ENCODE measurements at regions of chr3 and their contacts with region 1.

Region 1: DNA sequence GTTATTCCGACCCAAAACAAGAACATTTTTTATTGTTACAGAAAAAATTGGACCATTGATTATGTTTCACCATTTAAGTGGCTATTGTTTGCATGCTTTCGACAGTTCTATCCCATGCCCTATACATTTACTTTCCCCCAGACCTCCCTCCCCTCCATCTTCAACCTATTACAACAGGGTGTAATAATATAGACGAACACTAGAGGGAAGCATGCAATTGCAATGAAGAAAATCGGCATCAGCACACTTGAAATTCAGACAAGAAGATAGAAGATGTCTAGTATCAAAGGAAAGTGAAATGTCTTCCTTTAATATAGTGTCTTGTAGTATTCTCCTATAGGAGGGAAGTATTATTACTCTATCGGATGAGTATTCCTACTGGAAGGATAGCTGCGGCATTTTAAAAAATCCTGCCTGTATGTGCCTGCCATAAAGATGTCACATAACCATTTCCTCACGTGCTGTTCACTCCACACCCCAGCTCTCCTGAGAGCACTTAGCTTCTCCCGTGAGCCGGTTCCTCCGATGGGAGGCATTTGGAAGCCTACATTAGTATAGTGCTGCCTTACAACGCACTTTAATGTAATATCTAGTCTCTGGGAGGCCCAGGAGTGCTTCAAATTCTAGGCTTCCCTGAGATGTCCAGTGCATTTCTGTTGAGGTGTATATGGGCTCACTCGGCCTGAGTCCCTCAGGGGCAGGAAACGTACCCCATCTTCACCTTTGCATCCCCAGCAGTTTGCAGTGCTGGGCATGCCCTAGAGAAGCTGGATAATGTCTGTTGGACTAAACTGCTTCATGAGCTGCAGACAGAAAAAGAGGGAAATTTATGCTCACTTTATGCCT is 17.8 kb upstream of the ERICH6 start:
- DNase-seq: no peak
- H3K4me3 Mint-ChIP-seq: no peak overlapping the region
- H3K27ac Mint-ChIP-seq: no peak overlapping the region
- H3K4me1 Mint-ChIP-seq: peaks cover 18% of the 10 kb centered on the region
- H3K27me3 Mint-ChIP-seq: no peaks in the 10 kb centered on the region
- CTCF ChIP-seq: peak; percentile 85

Region 2: DNA sequence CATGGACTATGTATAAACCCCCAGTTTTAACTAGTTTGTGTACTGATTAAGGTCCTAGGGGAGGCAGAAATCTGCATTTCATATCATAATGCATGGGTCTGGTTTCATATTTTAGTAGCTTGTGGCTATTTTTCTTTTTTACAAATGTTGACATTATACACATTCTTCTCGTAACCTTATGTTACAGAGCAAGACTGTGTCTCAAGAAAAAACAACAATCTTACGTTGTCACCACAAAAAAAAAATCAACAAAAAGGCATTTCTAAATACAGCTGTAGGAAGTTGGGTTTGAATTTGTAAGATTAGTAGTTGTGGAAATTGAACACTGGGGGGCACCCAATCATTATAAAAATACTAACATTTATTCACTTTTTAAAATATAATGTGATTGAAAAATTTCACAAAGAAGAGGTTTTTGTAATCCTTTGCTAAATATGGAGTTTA is 193.1 kb before region 1 on chr3:
- CTCF ChIA-PET with region 1: no interaction called
- intact Hi-C with region 1: loop called (anchors 1 kb)
- DNase-seq: no peak
- H3K4me3 Mint-ChIP-seq: no peak overlapping the region
- H3K27ac Mint-ChIP-seq: no peak overlapping the region
- H3K4me1 Mint-ChIP-seq: no peaks in the 10 kb centered on the region
- H3K27me3 Mint-ChIP-seq: no peaks in the 10 kb centered on the region
- CTCF ChIP-seq: peak; percentile 39

Region 3: DNA sequence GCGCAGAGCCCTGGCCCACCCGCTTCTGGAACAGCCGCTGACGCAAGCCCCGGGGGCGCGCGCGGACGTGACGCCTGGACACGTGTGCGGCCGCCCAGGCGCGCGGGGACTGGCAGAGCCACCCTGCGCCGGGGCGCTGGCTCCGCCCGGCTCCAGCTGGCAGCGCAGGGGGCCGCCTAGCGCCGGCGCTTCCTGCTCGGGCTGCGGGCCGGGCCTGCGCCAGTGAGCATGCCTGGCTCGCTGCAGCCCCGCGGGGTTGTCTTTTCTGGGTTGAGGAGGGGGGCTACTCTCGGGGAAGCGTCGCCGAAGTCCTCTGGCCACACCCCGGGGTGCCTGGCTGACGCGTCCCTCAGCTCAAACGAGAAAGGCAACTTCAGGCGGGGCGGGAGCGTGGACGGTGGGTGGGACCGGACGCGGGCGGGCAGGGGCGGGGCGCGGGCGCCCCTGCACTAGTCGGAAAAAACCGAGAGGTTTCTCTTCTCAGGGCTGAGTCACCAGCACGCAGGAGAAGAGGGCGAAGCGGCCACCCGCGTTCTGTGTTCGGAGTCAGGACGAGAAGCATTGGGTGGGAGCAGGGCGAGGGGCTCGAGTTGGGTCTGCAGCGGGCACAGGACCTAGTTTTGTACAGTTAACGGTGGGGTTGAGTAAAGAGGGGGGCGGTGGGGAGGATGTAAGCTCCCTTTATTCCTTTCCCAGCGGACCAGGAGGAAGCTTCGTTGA is 41.8 kb after region 1 on chr3 and contains the start of gene SIAH2:
- CTCF ChIA-PET with region 1: interaction called, 7 read pairs
- intact Hi-C with region 1: loop called (anchors 2 kb)
- DNase-seq: peak; percentile 97
- H3K4me3 Mint-ChIP-seq: peak within 1 kb of the TSS; percentile 88
- H3K27ac Mint-ChIP-seq: peak within 1 kb of the TSS; percentile 97
- H3K4me1 Mint-ChIP-seq: peaks cover 46% of the 10 kb centered on the region
- H3K27me3 Mint-ChIP-seq: no peaks in the 10 kb centered on the region
- CTCF ChIP-seq: no peak
- total RNA-seq, gene SIAH2: 30.6 and 33.6 TPM in 2 replicates

Region 4: DNA sequence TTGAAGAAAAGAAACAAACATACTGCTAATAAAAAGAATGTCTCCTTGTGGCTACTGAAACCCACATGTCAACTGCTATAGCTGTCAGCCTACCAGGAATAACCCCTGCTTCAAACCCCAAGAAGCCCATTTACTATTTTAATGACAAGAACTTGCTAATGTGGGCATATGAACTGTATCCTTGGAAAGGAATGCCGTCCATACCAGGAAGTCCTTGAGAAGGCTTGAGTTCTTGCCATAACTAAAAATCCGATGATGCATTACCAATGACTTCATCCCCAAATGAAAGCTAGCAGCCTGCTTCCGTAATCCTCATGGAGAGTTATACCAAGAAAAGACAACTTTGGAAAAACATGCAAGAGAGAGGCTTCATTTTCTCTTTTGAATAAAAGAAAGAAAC is 148.9 kb after region 1 on chr3:
- CTCF ChIA-PET with region 1: no interaction called
- intact Hi-C with region 1: loop called (anchors 1 kb)
- DNase-seq: no peak
- H3K4me3 Mint-ChIP-seq: no peak overlapping the region
- H3K27ac Mint-ChIP-seq: no peak overlapping the region
- H3K4me1 Mint-ChIP-seq: no peaks in the 10 kb centered on the region
- H3K27me3 Mint-ChIP-seq: peaks cover 24% of the 10 kb centered on the region
- CTCF ChIP-seq: no peak

Region 5: GRCh38 chr3:151146071-151146730 is 424.7 kb after region 1 on chr3:
- CTCF ChIA-PET with region 1: no interaction called
- intact Hi-C with region 1: loop called (anchors 1 kb)
- DNase-seq: peak; percentile 78
- H3K4me3 Mint-ChIP-seq: no peak overlapping the region
- H3K27ac Mint-ChIP-seq: no peak overlapping the region
- H3K4me1 Mint-ChIP-seq: no peaks in the 10 kb centered on the region
- H3K27me3 Mint-ChIP-seq: peaks cover 17% of the 10 kb centered on the region
- CTCF ChIP-seq: peak; percentile 96

Measured in Calu3 (cell line).